Keratinocyte (primary cell): ENCODE measurements at regions of chr9 and their contacts with region 1.

Region 1: GRCh38 chr9:76810377-76810957 is 46.2 kb downstream of the PCA3 start:
- DNase-seq: peak; percentile 23
- H3K4me3 ChIP-seq: no peak overlapping the region
- H3K27ac ChIP-seq: no peak overlapping the region
- H3K4me1 ChIP-seq: peaks cover 3% of the 10 kb centered on the region
- H3K27me3 ChIP-seq: no peaks in the 10 kb centered on the region
- CTCF ChIP-seq: peak; percentile 75 to 87 (median 82)

Region 2: GRCh38 chr9:76926324-76926731 is 115.9 kb after region 1 on chr9:
- dilution Hi-C with region 1: no loop called
- DNase-seq: no peak
- H3K4me3 ChIP-seq: no peak overlapping the region
- H3K27ac ChIP-seq: no peak overlapping the region
- H3K4me1 ChIP-seq: no peaks in the 10 kb centered on the region
- H3K27me3 ChIP-seq: no peaks in the 10 kb centered on the region
- CTCF ChIP-seq: no peak

Region 3: GRCh38 chr9:76987594-76988200 is 177.2 kb after region 1 on chr9:
- dilution Hi-C with region 1: loop called (anchors 25 kb)
- DNase-seq: no peak
- H3K4me3 ChIP-seq: no peak overlapping the region
- H3K27ac ChIP-seq: no peak overlapping the region
- H3K4me1 ChIP-seq: no peaks in the 10 kb centered on the region
- H3K27me3 ChIP-seq: peaks cover 8% of the 10 kb centered on the region
- CTCF ChIP-seq: peak; percentile 53 to 71 (median 67)

Region 4: GRCh38 chr9:77024776-77025545 is 214.5 kb after region 1 on chr9:
- dilution Hi-C with region 1: no loop called
- DNase-seq: peak; percentile 63
- H3K4me3 ChIP-seq: no peak overlapping the region
- H3K27ac ChIP-seq: no peak overlapping the region
- H3K4me1 ChIP-seq: peaks cover 8% of the 10 kb centered on the region
- H3K27me3 ChIP-seq: peaks cover 38% of the 10 kb centered on the region
- CTCF ChIP-seq: no peak

Region 5: DNA sequence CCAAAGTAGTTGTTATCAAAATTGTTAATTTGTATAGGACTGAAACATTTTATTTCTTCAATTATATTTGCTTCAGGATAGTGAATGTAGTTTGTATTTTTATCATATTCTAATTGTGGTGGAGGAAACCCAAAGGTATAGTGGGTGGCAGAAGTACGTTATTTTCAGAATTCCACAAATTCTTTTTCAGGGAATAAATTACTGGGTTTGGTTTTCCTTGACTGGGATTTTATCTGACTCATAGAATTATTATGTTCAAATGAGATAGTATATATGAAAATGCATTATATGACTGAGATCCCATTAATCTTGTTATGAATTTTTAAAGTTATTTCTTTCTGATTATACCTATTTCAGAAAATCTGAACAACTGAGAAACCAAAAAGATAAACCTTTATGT is 440.6 kb after region 1 on chr9:
- dilution Hi-C with region 1: no loop called
- DNase-seq: no peak
- H3K4me3 ChIP-seq: no peak overlapping the region
- H3K27ac ChIP-seq: no peak overlapping the region
- H3K4me1 ChIP-seq: no peaks in the 10 kb centered on the region
- H3K27me3 ChIP-seq: no peaks in the 10 kb centered on the region
- CTCF ChIP-seq: no peak